ENCODE measurements at regions of chr14 and their contacts with region 1.

Region 1: DNA sequence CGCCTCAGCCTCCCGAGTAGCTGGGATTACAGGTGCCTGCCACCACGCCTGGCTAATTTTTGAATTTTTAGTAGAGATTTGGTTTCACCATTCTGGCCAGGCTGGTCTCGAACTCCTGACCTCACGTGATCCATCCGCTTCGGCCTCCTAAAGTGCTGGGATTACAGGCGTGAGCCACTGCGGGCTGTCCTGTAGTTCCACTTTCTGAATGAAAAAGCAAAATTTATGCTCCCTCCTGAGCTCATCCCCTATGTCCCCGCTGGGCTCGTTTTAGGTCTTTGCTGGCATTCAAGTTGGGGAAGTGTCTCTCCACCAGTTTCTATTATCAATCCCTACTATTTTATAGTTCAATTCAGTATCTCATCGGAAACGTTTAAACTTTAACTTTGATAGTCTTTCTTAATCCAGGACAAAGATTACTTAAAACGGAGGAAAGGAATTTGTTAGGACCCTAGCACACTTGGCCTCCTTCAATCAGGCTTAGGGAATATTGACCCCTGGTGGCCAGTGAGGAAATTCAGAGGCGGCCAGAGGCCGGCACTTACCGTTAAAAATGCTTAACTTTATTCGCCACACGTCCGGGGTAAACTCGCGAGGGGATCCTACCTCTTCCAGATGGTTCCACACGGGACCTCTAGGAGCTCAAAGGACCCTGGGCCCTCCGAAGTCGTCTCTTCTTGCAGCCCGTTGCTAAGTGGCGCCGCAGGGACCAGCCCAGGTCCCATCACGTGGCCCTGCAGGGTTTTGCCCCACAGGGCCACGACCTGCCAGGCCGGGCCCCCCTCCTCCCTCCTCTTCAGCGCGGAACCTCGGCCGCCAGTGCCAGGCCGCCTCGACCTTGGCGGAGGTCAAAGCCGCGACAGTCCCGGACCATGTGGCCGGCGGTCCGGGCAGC is 11.4 kb upstream of the DNAL1 start:
- DNase-seq: peak; percentile 52
- ATAC-seq: peak; percentile 83
- H3K4me3 Mint-ChIP-seq: peak overlapping the region; percentile 83
- H3K27ac Mint-ChIP-seq: peak overlapping the region; percentile 12
- H3K4me1 Mint-ChIP-seq: peaks cover 4% of the 10 kb centered on the region
- H3K27me3 Mint-ChIP-seq: peaks cover 11% of the 10 kb centered on the region
- CTCF ChIP-seq: no peak

Region 2: DNA sequence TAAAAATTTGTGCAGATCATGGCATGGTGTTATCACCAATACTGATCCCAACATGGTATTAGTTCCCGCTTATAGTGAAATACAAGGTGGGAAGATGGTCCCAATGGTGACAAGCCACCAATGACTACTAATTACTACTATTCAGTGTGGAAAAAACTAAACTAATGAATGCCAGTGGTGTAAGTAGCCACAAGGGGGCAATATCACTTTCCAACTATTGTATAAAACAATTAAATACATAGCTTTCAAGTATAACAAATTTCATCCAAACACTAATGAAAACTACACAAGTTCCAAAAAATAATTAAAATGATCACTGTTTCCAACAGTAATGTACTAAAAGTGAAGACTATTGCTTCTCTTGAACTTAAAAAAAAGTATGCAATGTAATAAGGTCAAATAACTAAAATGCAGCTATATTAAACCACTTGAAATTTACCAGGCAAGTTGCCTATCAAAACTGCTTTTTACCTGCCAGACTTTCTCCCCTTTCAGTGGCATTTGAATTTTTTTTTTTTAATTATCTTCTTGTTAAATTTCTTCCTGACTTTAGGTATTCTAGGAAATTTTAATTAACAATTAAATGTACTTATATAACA is 338.1 kb before region 1 on chr14:
- CTCF ChIA-PET with region 1: interaction called, 7 read pairs
- POLR2A ChIA-PET with region 1: no interaction called
- intact Hi-C with region 1: loop called (anchors 1 kb)
- DNase-seq: no peak
- ATAC-seq: peak; percentile 60
- H3K4me3 Mint-ChIP-seq: no peak overlapping the region
- H3K27ac Mint-ChIP-seq: no peak overlapping the region
- H3K4me1 Mint-ChIP-seq: peaks cover 2% of the 10 kb centered on the region
- H3K27me3 Mint-ChIP-seq: no peaks in the 10 kb centered on the region
- CTCF ChIP-seq: peak; percentile 33

Region 3: DNA sequence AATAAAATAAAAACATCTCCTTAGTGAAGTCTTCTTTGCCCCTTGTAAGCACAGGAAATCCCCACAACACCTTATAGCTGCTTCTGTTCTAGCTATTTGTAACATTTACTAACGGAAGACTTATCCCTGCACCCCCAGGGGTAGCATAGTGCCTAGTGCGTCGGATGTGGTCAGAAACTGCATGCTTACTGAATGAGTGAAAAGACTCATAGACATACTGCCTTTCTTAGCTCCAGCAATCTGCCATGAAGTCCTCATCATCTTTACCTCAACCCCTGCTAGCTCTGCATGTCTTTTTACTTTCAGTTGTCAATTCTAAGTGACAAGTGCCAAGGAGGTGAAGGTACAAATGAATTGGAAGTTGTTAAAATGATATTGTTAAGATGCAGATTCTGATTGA is 129.7 kb before region 1 on chr14:
- CTCF ChIA-PET with region 1: interaction called, 62 read pairs
- POLR2A ChIA-PET with region 1: no interaction called
- intact Hi-C with region 1: loop called (anchors 1 kb)
- DNase-seq: no peak
- ATAC-seq: no peak
- H3K4me3 Mint-ChIP-seq: no peak overlapping the region
- H3K27ac Mint-ChIP-seq: no peak overlapping the region
- H3K4me1 Mint-ChIP-seq: no peaks in the 10 kb centered on the region
- H3K27me3 Mint-ChIP-seq: no peaks in the 10 kb centered on the region
- CTCF ChIP-seq: no peak

Region 4: DNA sequence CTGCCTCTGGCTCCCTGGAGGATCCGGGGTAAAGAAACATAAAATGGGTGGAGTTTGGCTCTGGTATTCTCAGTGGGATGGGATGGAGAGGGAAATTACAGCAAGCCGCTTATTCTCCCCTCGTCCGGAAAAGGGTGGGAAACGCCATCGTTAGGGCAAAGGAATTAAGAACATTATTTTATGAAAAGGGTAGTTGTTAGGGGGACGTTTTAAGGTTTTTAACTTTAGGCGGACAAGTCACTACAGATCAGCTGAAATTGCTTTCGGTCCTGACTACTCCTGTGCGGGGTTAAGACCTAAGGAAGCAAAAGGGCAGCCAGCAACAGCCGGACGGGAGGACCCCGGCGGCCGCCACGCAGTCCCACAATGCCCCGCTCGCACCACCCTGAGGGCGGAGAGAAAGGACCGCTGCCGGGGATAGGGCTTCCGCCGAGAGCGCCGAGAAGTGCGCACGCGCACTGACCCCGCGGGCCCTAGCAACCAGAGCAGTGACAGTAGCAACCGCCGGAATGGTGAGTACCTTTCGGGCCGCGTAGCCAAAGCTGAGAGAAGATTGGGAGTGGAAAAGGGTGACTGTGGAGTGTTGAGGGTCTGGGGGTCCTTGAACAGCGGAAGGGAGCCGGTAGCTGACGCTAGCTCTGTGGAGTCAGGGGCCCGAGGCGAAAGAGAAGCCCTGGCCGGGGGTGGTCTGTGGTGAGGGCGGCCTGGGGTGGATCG is 11.3 kb after region 1 on chr14 and contains the start of gene DNAL1:
- CTCF ChIA-PET with region 1: interaction called, 13 read pairs
- POLR2A ChIA-PET with region 1: interaction called, 3 read pairs
- intact Hi-C with region 1: loop called (anchors 1 kb)
- DNase-seq: peak; percentile 89
- ATAC-seq: peak; percentile 99
- H3K4me3 Mint-ChIP-seq: peak within 1 kb of the TSS; percentile 93
- H3K27ac Mint-ChIP-seq: peak within 1 kb of the TSS; percentile 87
- H3K4me1 Mint-ChIP-seq: peaks cover 14% of the 10 kb centered on the region
- H3K27me3 Mint-ChIP-seq: no peaks in the 10 kb centered on the region
- CTCF ChIP-seq: no peak
- total RNA-seq, gene DNAL1: 7.7 and 7.8 TPM in 2 replicates